Transverse colon (tissue), 4 donors: ENCODE measurements at regions of chr11 and their contacts with region 1.

Region 1: GRCh38 chr11:19259487-19260345 is 19.0 kb upstream of the E2F8 start:
- DNase-seq: peak; percentile 75
- H3K4me3 ChIP-seq: peak overlapping the region in 1 of 4 donors; percentile 19
- H3K27ac ChIP-seq: no peak overlapping the region
- H3K4me1 ChIP-seq: peaks cover 0 to 4% (median 0%) of the 10 kb centered on the region in 4 donors
- H3K27me3 ChIP-seq: no peaks in the 10 kb centered on the region
- CTCF ChIP-seq: peak; percentile 87 to 96 (median 92)
- EP300 ChIP-seq: no peak
- POLR2A ChIP-seq: no peak

Region 2: GRCh38 chr11:19790831-19791552 is 531.3 kb after region 1 on chr11:
- in situ Hi-C with region 1: no loop called
- intact Hi-C with region 1: no loop called
- DNase-seq: peak; percentile 86
- H3K4me3 ChIP-seq: no peak overlapping the region
- H3K27ac ChIP-seq: peak overlapping the region; percentile 65 to 78 (median 70)
- H3K4me1 ChIP-seq: peaks cover 14 to 54% (median 43%) of the 10 kb centered on the region in 4 donors
- H3K27me3 ChIP-seq: no peaks in the 10 kb centered on the region
- CTCF ChIP-seq: no peak
- EP300 ChIP-seq: no peak
- POLR2A ChIP-seq: no peak

Region 3: GRCh38 chr11:20618083-20618482 is 1358.4 kb after region 1 on chr11:
- in situ Hi-C with region 1: no loop called
- intact Hi-C with region 1: loop called (anchors 5 kb)
- DNase-seq: no peak
- H3K4me3 ChIP-seq: no peak overlapping the region
- H3K27ac ChIP-seq: no peak overlapping the region
- H3K4me1 ChIP-seq: no peaks in the 10 kb centered on the region
- H3K27me3 ChIP-seq: peaks cover 6% of the 10 kb centered on the region
- CTCF ChIP-seq: no peak
- EP300 ChIP-seq: no peak
- POLR2A ChIP-seq: no peak